CD14-positive monocyte (primary cell): ENCODE measurements at regions of chr5 and their contacts with region 1.

Region 1: GRCh38 chr5:127030259-127031146 is at the start of gene MARCHF3:
- DNase-seq: peak; percentile 96 to 98 (median 96)
- H3K4me3 ChIP-seq: peak within 1 kb of the TSS; percentile 73 to 85 (median 84)
- H3K4me3 Mint-ChIP-seq: peak within 1 kb of the TSS; percentile 92 to 94
- H3K27ac ChIP-seq: peak within 1 kb of the TSS; percentile 73 to 76
- H3K27ac Mint-ChIP-seq: peak within 1 kb of the TSS; percentile 76 to 90 (median 85)
- H3K4me1 ChIP-seq: peaks cover 19 to 24% of the 10 kb centered on the region in 2 donors
- H3K4me1 Mint-ChIP-seq: peaks cover 25% of the 10 kb centered on the region
- H3K27me3 ChIP-seq: peaks cover 14 to 26% of the 10 kb centered on the region in 2 donors
- H3K27me3 Mint-ChIP-seq: peaks cover 23 to 41% (median 36%) of the 10 kb centered on the region in 3 donors
- CTCF ChIP-seq: peak; percentile 16
- polyA plus RNA-seq, gene MARCHF3: 0.88 to 1.6 (median 0.96) TPM

Region 2: DNA sequence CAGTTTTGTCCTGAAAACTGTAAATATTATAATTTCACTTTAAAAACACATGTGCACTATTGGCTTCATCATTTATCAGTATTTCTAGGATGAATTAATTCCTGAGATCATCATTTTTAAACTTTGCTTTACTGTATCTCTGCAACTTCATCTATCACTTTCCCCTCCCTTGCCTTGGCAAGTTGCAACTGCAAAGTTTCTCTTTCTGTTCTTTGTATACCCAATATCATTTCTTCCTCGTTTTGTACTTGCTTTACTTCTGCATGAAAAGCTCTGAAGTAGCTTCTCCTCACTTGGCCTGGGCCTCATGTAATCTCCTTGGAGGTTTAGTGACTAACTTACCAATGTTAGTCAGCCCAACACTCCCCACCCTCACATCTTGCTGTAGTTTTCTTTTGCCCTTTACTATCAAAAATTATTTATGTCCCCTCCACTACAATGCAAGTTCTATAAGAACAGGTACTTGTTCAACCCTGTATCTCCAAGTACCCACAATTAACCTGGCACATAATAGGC is 30.0 kb after region 1 on chr5:
- intact Hi-C with region 1: loop called in 1 of 2 experiments (anchors 1 kb)
- DNase-seq: no peak
- H3K4me3 ChIP-seq: no peak overlapping the region
- H3K4me3 Mint-ChIP-seq: no peak overlapping the region
- H3K27ac ChIP-seq: no peak overlapping the region
- H3K27ac Mint-ChIP-seq: peak overlapping the region in 1 of 7 donors; percentile 19
- H3K4me1 ChIP-seq: peaks cover 3 to 7% of the 10 kb centered on the region in 2 donors
- H3K4me1 Mint-ChIP-seq: peaks cover 17% of the 10 kb centered on the region
- H3K27me3 ChIP-seq: no peaks in the 10 kb centered on the region
- H3K27me3 Mint-ChIP-seq: no peaks in the 10 kb centered on the region
- CTCF ChIP-seq: no peak